Endothelial cell of umbilical vein (primary cell): ENCODE measurements at regions of chr2 and their contacts with region 1.

Region 1: GRCh38 chr2:100984892-100985379 is 17.2 kb upstream of the RPL31 start:
- DNase-seq: peak; percentile 78
- H3K4me3 ChIP-seq: no peak overlapping the region
- H3K27ac ChIP-seq: no peak overlapping the region
- H3K4me1 ChIP-seq: peaks cover 7% of the 10 kb centered on the region
- H3K27me3 ChIP-seq: no peaks in the 10 kb centered on the region
- CTCF ChIP-seq: peak; percentile 76 to 84
- POLR2A ChIP-seq: no peak

Region 2: GRCh38 chr2:100427628-100428258 is 557.2 kb before region 1 on chr2:
- CTCF ChIA-PET with region 1: no interaction called
- POLR2A ChIA-PET with region 1: no interaction called
- dilution Hi-C with region 1: no loop called
- intact Hi-C with region 1: loop called (anchors 10 kb)
- DNase-seq: peak; percentile 52
- H3K4me3 ChIP-seq: no peak overlapping the region
- H3K27ac ChIP-seq: no peak overlapping the region
- H3K4me1 ChIP-seq: no peaks in the 10 kb centered on the region
- H3K27me3 ChIP-seq: peaks cover 9 to 11% of the 10 kb centered on the region in 2 experiments
- CTCF ChIP-seq: peak; percentile 27 to 35
- POLR2A ChIP-seq: no peak

Region 3: DNA sequence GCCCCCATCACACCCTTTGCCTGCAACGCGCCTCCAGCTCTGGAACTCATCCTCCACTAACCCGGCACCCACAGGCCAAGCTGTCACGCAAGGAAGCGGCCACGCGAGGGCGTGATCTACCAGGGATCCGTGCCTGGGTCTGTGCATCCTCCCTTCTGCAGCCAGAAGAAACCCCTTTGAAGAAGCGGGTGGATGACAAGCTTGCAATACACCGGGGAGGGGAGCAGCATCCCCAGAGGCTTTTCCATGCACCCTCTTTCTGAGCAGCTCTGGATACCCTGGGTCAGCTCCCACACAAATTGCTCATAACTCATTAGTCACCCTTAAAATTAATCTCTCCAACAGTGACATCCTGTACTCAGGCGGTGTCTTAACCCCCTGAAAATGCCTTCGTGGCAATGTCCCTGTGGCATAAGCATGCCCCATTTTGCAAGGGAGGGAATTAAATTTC is 374.5 kb before region 1 on chr2:
- CTCF ChIA-PET with region 1: interaction called, 25 read pairs
- POLR2A ChIA-PET with region 1: no interaction called
- dilution Hi-C with region 1: no loop called
- intact Hi-C with region 1: loop called (anchors 1 kb)
- DNase-seq: peak; percentile 60
- H3K4me3 ChIP-seq: no peak overlapping the region
- H3K27ac ChIP-seq: no peak overlapping the region
- H3K4me1 ChIP-seq: no peaks in the 10 kb centered on the region
- H3K27me3 ChIP-seq: no peaks in the 10 kb centered on the region
- CTCF ChIP-seq: peak; percentile 64 to 88
- POLR2A ChIP-seq: no peak

Region 4: GRCh38 chr2:100924520-100925451 is 60.1 kb before region 1 on chr2:
- CTCF ChIA-PET with region 1: interaction called, 7 read pairs
- POLR2A ChIA-PET with region 1: no interaction called
- dilution Hi-C with region 1: no loop called
- intact Hi-C with region 1: loop called (anchors 2 kb)
- DNase-seq: peak; percentile 99
- H3K4me3 ChIP-seq: peak overlapping the region in 2 of 3 experiments; percentile 11 to 29
- H3K27ac ChIP-seq: peak overlapping the region; percentile 96
- H3K4me1 ChIP-seq: peaks cover 28% of the 10 kb centered on the region
- H3K27me3 ChIP-seq: no peaks in the 10 kb centered on the region
- CTCF ChIP-seq: no peak
- POLR2A ChIP-seq: peak; percentile 7

Region 5: DNA sequence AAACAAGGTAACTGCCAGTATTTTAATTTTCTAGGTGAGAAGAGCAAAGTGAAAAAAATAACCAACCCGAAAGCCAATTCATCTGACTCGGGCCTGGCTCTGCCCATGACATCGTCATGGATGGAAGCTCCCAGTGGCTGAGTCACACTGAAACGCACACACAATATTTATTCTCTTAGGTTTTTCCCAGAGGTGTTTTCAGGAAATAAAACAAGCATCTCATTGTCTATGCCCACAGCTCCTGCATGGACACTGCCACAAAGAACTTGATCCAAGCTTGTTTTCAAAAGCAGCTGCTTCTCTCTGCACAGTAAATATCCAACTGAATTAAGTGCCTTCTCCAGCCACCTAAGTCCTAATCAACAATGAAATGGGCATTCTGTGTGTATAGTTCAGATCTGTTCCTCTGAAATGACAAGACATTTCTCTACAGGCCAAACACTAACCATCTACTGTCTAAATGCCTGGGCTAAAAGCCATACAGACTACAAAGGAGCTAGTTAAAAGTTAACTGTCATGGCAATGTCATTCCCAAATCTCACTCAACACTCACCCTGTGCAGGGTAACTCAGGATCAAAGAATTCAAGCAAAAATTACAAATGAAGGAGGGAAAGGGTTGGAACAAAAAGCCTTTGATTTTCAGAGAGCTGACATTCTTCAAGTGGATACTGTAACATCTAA is 80.1 kb after region 1 on chr2:
- CTCF ChIA-PET with region 1: no interaction called
- POLR2A ChIA-PET with region 1: no interaction called
- dilution Hi-C with region 1: no loop called
- intact Hi-C with region 1: no loop called
- DNase-seq: peak; percentile 68
- H3K4me3 ChIP-seq: no peak overlapping the region
- H3K27ac ChIP-seq: no peak overlapping the region
- H3K4me1 ChIP-seq: peaks cover 22% of the 10 kb centered on the region
- H3K27me3 ChIP-seq: no peaks in the 10 kb centered on the region
- CTCF ChIP-seq: no peak
- POLR2A ChIP-seq: no peak